ENCODE measurements at regions of chr3 and their contacts with region 1.

Region 1: GRCh38 chr3:47475570-47476329 is at the start of gene SCAP:
- DNase-seq: peak; percentile 80
- ATAC-seq: peak; percentile 93
- H3K4me3 ChIP-seq: peak within 1 kb of the TSS; percentile 83
- H3K27ac ChIP-seq: peak within 1 kb of the TSS; percentile 57
- H3K4me1 ChIP-seq: peaks cover 3% of the 10 kb centered on the region
- H3K27me3 ChIP-seq: no peaks in the 10 kb centered on the region
- CTCF ChIP-seq: peak; percentile 78 to 96 (median 80)
- EP300 ChIP-seq: no peak
- POLR2A ChIP-seq: peak; percentile 75
- RAD21 ChIP-seq: peak; percentile 55
- polyA plus RNA-seq, gene SCAP: 1.5 to 4.3 TPM

Region 2: DNA sequence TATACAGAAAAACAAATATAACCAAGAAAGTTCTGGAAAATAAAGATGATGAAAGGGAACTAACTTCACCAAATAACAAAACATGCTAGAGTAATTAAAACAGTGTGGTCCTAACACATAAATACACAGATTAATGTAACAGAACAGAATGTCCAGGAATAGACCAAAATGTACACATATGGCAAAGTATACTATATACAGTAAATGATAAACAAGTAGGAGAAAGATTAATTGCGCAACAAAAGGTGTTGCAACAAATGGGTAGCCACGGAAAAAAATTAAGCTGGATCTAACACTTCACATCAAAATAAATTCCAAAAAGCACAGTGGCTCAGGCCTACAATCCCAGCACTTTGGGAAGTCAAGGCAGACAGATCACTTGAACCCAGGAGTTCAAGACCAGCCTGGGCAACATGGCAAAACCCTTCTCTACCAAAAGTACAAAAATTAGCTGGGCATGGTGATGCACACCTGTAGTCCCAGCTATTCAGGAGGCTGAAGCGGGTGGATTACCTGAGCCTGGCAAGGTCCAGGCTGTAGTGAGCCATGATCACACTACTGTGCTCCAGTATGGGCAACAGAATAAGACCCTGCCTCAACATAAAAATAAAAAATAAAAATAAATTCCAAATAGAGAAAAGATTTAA is 19.8 kb before region 1 on chr3:
- CTCF ChIA-PET with region 1: interaction called, 19 read pairs
- POLR2A ChIA-PET with region 1: interaction called, 3 read pairs
- RAD21 ChIA-PET with region 1: interaction called, 3 read pairs
- SMC1A ChIA-PET with region 1: interaction called, 15 read pairs
- in situ Hi-C with region 1: no loop called
- intact Hi-C with region 1: no loop called
- DNase-seq: no peak
- ATAC-seq: no peak
- H3K4me3 ChIP-seq: no peak overlapping the region
- H3K27ac ChIP-seq: no peak overlapping the region
- H3K4me1 ChIP-seq: no peaks in the 10 kb centered on the region
- H3K27me3 ChIP-seq: no peaks in the 10 kb centered on the region
- CTCF ChIP-seq: no peak
- EP300 ChIP-seq: no peak
- POLR2A ChIP-seq: no peak
- RAD21 ChIP-seq: no peak

Region 3: GRCh38 chr3:47491186-47491585 is 15.4 kb after region 1 on chr3:
- CTCF ChIA-PET with region 1: interaction called, 10 read pairs
- POLR2A ChIA-PET with region 1: interaction called, 3 read pairs
- RAD21 ChIA-PET with region 1: no interaction called
- SMC1A ChIA-PET with region 1: interaction called, 3 read pairs
- in situ Hi-C with region 1: no loop called
- intact Hi-C with region 1: no loop called
- DNase-seq: no peak
- ATAC-seq: peak; percentile 18
- H3K4me3 ChIP-seq: no peak overlapping the region
- H3K27ac ChIP-seq: peak overlapping the region; percentile 37
- H3K4me1 ChIP-seq: peaks cover 3% of the 10 kb centered on the region
- H3K27me3 ChIP-seq: no peaks in the 10 kb centered on the region
- CTCF ChIP-seq: no peak
- EP300 ChIP-seq: no peak
- POLR2A ChIP-seq: no peak
- RAD21 ChIP-seq: no peak

Region 4: DNA sequence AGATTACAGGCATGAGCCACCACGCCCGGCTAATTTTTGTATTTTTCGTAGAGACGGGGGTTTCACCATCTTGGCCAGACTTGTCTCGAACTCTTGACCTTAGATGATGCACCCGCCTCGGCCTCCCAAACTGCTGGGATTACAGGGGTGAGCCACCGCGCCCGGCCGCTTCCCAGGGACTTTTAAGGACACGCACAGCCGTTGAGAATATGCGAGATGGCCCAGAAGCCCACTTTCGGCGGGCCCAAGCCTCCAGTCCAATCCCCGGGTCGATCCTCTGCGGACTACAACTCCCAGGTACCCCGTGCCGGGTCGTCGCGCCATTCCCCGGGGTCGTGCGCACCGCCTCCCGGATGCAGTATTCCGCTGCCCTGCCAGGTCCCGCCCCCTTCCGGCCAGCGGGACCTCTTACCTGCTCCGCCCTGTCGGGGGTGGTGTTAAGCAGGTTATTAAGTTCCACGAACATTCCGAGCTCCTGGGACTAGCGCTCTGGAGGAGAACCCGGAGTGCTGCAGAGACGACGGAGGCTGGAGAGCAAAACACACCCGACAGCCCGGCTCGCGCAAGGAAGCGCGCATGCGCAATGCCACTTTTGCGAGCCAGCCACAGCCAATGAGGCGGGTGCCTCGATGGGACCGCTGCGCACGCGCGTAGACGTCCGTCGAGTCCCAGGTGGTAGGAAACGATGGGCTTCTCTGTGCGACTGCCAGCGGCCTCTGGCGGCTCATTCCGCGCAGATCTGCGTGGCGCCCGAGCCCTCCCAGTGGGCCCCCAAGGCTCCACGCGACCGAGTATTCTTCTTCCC is 37.6 kb after region 1 on chr3 and contains the start of gene ELP6:
- CTCF ChIA-PET with region 1: no interaction called
- POLR2A ChIA-PET with region 1: no interaction called
- RAD21 ChIA-PET with region 1: no interaction called
- SMC1A ChIA-PET with region 1: no interaction called
- in situ Hi-C with region 1: no loop called
- intact Hi-C with region 1: loop called (anchors 5 kb)
- DNase-seq: peak; percentile 88
- ATAC-seq: peak; percentile 99
- H3K4me3 ChIP-seq: peak within 1 kb of the TSS; percentile 73
- H3K27ac ChIP-seq: peak within 1 kb of the TSS; percentile 99
- H3K4me1 ChIP-seq: peaks cover 6% of the 10 kb centered on the region; the same call in 1 of the 2 replicates
- H3K27me3 ChIP-seq: no peaks in the 10 kb centered on the region
- CTCF ChIP-seq: peak; percentile 75 to 82 (median 81)
- EP300 ChIP-seq: no peak
- POLR2A ChIP-seq: peak; percentile 94
- RAD21 ChIP-seq: peak; percentile 61
- polyA plus RNA-seq, gene ELP6: 46.4 to 51.1 TPM